ENCODE measurements at regions of chr9 and their contacts with region 1.

Region 1: GRCh38 chr9:93051680-93052089 is 6.8 kb upstream of the SUSD3 start:
- DNase-seq: peak; percentile 40 to 89
- H3K4me3 ChIP-seq: no peak overlapping the region
- H3K27ac ChIP-seq: peak overlapping the region; percentile 90 to 92
- H3K4me1 ChIP-seq: peaks cover 13 to 47% of the 10 kb centered on the region in 2 donors
- H3K27me3 ChIP-seq: no peaks in the 10 kb centered on the region
- CTCF ChIP-seq: no peak

Region 2: DNA sequence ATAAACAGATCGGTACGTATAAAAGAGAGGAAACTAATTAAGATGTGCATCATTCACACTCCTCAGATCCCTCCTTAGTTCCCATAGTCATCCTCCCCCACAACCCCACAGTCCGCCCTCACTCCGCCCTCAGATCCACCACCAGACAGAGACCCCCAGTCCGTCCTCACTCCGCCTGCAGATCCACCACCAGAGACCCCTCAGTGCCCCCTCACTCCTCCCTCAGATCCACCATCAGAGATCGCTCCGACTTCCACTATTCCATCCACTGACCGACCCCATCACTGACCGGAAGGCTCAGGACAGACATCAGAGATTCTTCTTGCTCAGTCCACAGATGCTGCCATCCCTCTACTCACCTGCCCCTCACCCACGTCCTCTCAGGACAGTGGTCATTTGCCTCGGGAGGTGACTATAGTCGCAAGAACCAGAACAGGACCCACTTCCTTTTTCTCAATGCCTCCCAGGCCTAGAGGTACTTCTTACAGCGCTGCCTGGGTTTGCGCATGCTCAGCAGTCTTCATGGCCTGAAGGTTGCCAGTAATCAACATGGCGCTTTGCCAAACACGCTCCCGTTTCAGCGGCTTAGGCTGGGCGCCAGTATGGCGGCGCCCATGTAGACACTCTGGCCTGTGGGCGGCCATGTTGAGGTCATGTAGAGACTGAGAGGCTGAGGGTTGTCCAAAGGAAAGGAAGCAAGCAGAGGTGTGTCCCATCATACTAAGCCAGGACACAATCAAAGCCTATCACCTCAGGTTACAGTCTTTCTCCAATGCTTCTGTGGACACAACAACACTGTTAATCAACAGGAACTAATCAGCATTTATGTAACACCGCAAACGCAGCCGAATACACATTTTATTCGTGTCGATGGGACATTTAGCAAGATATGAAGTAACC is 173.9 kb before region 1 on chr9 and contains the start of gene ZNF484:
- intact Hi-C with region 1: loop called (anchors 5 kb)
- DNase-seq: peak; percentile 88 to 99
- H3K4me3 ChIP-seq: peak within 1 kb of the TSS; percentile 80 to 82
- H3K27ac ChIP-seq: peak within 1 kb of the TSS; percentile 74 to 85
- H3K4me1 ChIP-seq: peaks cover 0 to 6% of the 10 kb centered on the region in 2 donors
- H3K27me3 ChIP-seq: no peaks in the 10 kb centered on the region
- CTCF ChIP-seq: no peak
- total RNA-seq, gene ZNF484: 16.9 TPM

Region 3: DNA sequence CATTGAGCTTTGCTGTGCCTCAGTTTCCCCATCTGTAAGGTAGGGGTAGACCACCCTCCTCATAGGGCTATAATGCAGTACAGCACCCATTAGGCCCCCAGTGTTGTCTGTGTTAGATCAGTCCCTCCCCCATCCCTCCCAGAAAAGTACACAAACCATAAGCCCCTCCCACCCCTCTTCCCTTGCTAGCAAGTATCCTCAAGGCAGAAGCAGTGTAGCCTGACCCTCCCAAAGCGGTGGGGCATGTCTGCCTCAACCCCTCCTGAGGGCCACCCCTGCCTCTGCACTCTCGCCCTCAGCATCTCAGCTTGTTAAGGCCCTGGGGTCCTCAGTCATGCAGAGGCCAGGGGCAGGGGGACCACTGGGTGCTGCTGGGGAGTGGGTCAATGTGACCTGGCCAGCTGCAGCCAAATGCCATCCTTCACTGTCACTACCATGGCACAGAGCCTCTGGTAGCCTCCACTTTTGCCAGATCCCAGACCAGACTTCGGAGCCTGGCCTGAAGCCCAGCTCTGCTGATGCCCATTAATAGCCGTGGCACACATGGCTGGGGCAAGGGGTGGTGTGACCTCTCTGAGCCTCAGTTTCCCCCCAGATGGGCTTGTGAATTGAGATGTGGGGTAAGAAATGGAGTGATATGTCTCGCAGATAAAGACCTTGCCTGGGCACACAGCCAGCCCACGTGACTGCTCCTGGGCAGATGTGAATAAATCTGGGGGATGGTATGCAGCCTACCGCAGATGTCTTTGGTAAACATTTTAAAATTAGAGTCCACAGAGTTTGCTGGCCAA is 20.5 kb after region 1 on chr9:
- intact Hi-C with region 1: loop called (anchors 2 kb)
- DNase-seq: no peak
- H3K4me3 ChIP-seq: no peak overlapping the region
- H3K27ac ChIP-seq: peak overlapping the region; percentile 58 to 59
- H3K4me1 ChIP-seq: peaks cover 9 to 20% of the 10 kb centered on the region in 2 donors
- H3K27me3 ChIP-seq: no peaks in the 10 kb centered on the region
- CTCF ChIP-seq: no peak

Measured in ascending aorta (tissue), 2 donors.